ENCODE measurements at regions of chr20 and their contacts with region 1.

Region 1: GRCh38 chr20:57654363-57654997 is 34.3 kb upstream of the ZBP1 start:
- DNase-seq: peak; percentile 37 to 74 (median 47)
- H3K4me3 ChIP-seq: no peak overlapping the region
- H3K4me3 Mint-ChIP-seq: no peak overlapping the region
- H3K27ac ChIP-seq: no peak overlapping the region
- H3K27ac Mint-ChIP-seq: peak overlapping the region in 3 of 8 donors; percentile 66 to 77 (median 77)
- H3K4me1 ChIP-seq: peaks cover 22% of the 10 kb centered on the region
- H3K4me1 Mint-ChIP-seq: peaks cover 15 to 41% (median 20%) of the 10 kb centered on the region in 3 donors
- H3K27me3 ChIP-seq: no peaks in the 10 kb centered on the region
- H3K27me3 Mint-ChIP-seq: peaks cover 0 to 4% of the 10 kb centered on the region in 2 donors

Region 2: GRCh38 chr20:57391074-57391554 is 263.4 kb before region 1 on chr20 and contains the start of gene RBM38:
- CTCF ChIA-PET with region 1: no interaction called
- POLR2A ChIA-PET with region 1: no interaction called
- DNase-seq: peak; percentile 65 to 80 (median 69)
- H3K4me3 ChIP-seq: peak within 1 kb of the TSS; percentile 96
- H3K4me3 Mint-ChIP-seq: peak within 1 kb of the TSS; percentile 88 to 99 (median 94)
- H3K27ac ChIP-seq: peak within 1 kb of the TSS; percentile 96
- H3K27ac Mint-ChIP-seq: peak within 1 kb of the TSS; percentile 90 to 100 (median 99)
- H3K4me1 ChIP-seq: peaks cover 48% of the 10 kb centered on the region
- H3K4me1 Mint-ChIP-seq: peaks cover 45 to 57% (median 46%) of the 10 kb centered on the region in 3 donors
- H3K27me3 ChIP-seq: no peaks in the 10 kb centered on the region
- H3K27me3 Mint-ChIP-seq: peaks cover 0 to 5% of the 10 kb centered on the region in 2 donors
- total RNA-seq, gene RBM38: 101 to 107 TPM

Region 3: GRCh38 chr20:57605045-57605444 is 49.4 kb before region 1 on chr20:
- CTCF ChIA-PET with region 1: interaction called, 11 read pairs
- POLR2A ChIA-PET with region 1: no interaction called
- DNase-seq: peak in 4 of 5 donors; percentile 24 to 79 (median 58)
- H3K4me3 ChIP-seq: no peak overlapping the region
- H3K4me3 Mint-ChIP-seq: peak overlapping the region; percentile 4 to 75 (median 70)
- H3K27ac ChIP-seq: peak overlapping the region; percentile 65
- H3K27ac Mint-ChIP-seq: peak overlapping the region; percentile 88 to 98 (median 95)
- H3K4me1 ChIP-seq: peaks cover 16% of the 10 kb centered on the region
- H3K4me1 Mint-ChIP-seq: peaks cover 27 to 49% (median 28%) of the 10 kb centered on the region in 3 donors
- H3K27me3 ChIP-seq: no peaks in the 10 kb centered on the region
- H3K27me3 Mint-ChIP-seq: peaks cover 0 to 5% of the 10 kb centered on the region in 2 donors

Region 4: DNA sequence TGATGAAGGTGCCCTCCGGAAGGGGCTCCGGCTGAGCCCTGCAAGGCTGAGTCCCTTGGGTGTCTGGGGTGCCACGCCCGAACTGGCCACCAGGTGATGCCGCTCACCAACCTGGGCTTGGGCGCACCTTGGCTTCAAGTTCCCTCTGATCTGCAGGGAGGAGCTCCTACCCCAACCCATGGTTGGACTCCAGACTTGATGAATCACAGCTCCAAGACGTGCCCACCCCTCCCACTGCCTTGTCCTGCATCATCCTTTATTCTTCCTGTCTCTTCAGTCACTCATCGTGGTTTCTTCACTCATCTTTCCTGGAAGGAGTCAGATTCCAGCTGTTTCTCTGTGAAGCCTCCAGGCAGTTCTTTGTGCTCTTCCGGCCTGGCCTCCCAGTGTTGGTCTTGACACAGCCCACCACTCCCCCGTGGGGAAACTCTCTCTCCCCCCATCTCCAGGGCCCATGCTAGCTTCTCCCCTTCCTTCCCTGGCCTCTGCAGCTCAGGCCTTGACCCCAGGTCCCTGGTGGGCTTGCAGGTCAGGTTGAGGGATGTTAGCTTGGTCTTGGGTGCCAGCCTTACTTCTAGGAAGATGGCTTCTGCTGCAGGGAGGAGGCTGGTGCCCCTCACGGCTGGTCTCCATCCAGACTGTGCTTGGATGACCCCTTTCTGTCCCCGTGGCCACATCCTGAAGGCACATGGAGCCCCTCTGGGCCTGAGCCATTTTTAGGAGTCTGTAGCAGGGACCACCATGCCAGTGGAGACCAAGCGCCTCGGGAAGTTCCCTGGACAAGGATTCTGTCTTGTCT is 31.7 kb before region 1 on chr20:
- CTCF ChIA-PET with region 1: interaction called, 45 read pairs
- POLR2A ChIA-PET with region 1: interaction called, 6 read pairs
- DNase-seq: peak; percentile 48 to 79 (median 55)
- H3K4me3 ChIP-seq: no peak overlapping the region
- H3K4me3 Mint-ChIP-seq: peak overlapping the region in 5 of 7 donors; percentile 26 to 81 (median 69)
- H3K27ac ChIP-seq: no peak overlapping the region
- H3K27ac Mint-ChIP-seq: peak overlapping the region; percentile 46 to 94 (median 88)
- H3K4me1 ChIP-seq: peaks cover 72% of the 10 kb centered on the region
- H3K4me1 Mint-ChIP-seq: peaks cover 63 to 79% (median 75%) of the 10 kb centered on the region in 3 donors
- H3K27me3 ChIP-seq: no peaks in the 10 kb centered on the region
- H3K27me3 Mint-ChIP-seq: peaks cover 0 to 3% of the 10 kb centered on the region in 2 donors

Region 5: DNA sequence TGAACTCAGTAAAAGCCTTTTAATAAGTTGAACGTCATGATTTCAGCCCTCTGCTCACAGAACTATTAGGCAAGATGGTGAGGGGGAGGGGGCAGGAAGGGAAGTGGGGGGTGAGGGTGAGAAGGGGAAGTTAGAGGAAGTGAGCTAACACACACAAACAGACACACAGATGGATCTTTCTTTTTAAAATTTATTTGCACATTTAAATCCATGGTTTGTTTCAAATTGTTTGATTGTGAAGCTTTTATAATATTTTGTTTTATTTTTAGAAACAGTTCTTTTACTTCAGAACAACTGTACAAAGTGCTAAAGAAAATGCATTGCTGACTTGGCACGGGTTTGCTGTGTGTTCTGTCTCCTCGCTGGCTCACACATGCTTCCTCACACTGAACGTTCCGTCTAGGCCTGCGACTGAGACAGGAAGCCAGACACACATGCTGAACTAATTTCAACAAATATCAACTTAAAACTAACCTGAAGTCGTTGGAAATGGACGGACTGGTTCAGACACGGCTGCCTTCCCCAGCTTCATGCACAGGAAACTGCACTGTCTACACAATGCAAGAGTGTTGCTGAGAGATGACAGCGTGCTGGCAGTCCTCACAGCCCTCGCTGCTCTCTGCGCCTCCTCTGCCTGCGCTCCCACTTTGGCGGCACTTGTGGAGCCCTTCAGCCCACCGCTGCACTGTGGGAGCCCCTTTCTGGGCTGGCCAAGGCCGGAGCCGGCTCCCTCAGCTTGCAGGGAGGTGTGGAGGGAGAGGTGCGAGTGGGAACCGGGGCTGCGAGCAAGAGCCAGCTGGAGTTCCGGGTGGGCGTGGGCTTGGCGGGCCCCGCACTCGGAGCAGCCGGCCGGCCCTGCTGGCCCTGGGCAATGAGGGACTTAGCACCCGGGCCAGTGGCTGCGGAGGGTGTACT is 26.2 kb before region 1 on chr20:
- CTCF ChIA-PET with region 1: interaction called, 45 read pairs
- POLR2A ChIA-PET with region 1: interaction called, 6 read pairs
- DNase-seq: peak; percentile 42 to 80 (median 68)
- H3K4me3 ChIP-seq: peak overlapping the region; percentile 66
- H3K4me3 Mint-ChIP-seq: peak overlapping the region; percentile 61 to 96 (median 86)
- H3K27ac ChIP-seq: peak overlapping the region; percentile 68
- H3K27ac Mint-ChIP-seq: peak overlapping the region; percentile 93 to 100 (median 98)
- H3K4me1 ChIP-seq: peaks cover 54% of the 10 kb centered on the region
- H3K4me1 Mint-ChIP-seq: peaks cover 53 to 78% (median 78%) of the 10 kb centered on the region in 3 donors
- H3K27me3 ChIP-seq: no peaks in the 10 kb centered on the region
- H3K27me3 Mint-ChIP-seq: peaks cover 0 to 9% of the 10 kb centered on the region in 2 donors

Region 6: GRCh38 chr20:57667924-57668782 is 13.7 kb after region 1 on chr20:
- CTCF ChIA-PET with region 1: interaction called, 11 read pairs
- POLR2A ChIA-PET with region 1: no interaction called
- DNase-seq: no peak
- H3K4me3 ChIP-seq: no peak overlapping the region
- H3K4me3 Mint-ChIP-seq: no peak overlapping the region
- H3K27ac ChIP-seq: no peak overlapping the region
- H3K27ac Mint-ChIP-seq: peak overlapping the region in 1 of 8 donors; percentile 29
- H3K4me1 ChIP-seq: no peaks in the 10 kb centered on the region
- H3K4me1 Mint-ChIP-seq: peaks cover 0 to 4% (median 0%) of the 10 kb centered on the region in 3 donors
- H3K27me3 ChIP-seq: no peaks in the 10 kb centered on the region
- H3K27me3 Mint-ChIP-seq: peaks cover 0 to 6% of the 10 kb centered on the region in 2 donors

Region 7: DNA sequence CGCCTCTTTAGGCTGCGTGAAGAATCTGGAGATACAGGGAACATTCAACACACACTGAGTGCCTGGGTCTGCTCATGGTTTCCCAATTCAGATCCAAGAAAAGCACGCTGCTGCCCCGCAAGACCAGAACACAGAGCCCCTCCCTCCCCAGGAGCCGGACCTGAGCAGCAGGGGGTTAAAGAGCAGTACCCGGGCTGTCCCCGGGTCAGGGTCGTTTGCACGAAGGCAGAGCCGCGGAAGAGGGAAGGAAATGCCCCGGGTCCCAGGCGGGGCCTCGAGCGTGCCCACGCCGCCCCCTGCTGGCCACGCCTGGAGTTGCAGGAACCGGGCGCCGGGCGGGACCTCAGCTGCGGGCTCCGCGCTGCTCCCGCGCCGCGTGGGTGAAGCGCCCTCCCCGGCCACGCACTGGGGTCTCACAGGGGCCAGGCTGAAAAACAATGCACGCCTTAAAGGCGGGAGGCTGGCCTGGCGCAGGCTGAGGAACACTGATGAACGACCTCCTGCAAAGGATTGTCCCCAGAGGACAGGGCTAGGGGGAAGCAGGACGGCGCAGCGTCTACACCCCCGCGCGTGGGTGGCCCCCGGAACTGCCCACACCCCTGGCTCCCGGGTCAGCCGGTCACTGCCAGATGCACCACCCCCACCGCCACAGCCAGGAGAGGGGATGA is 525.1 kb after region 1 on chr20:
- CTCF ChIA-PET with region 1: interaction called, 10 read pairs
- POLR2A ChIA-PET with region 1: no interaction called
- DNase-seq: peak; percentile 43 to 72 (median 52)
- H3K4me3 ChIP-seq: peak overlapping the region; percentile 47
- H3K4me3 Mint-ChIP-seq: peak overlapping the region in 5 of 7 donors; percentile 26 to 68 (median 53)
- H3K27ac ChIP-seq: no peak overlapping the region
- H3K27ac Mint-ChIP-seq: peak overlapping the region in 1 of 8 donors; percentile 48
- H3K4me1 ChIP-seq: peaks cover 9% of the 10 kb centered on the region
- H3K4me1 Mint-ChIP-seq: peaks cover 3 to 17% (median 5%) of the 10 kb centered on the region in 3 donors
- H3K27me3 ChIP-seq: peaks cover 12% of the 10 kb centered on the region
- H3K27me3 Mint-ChIP-seq: peaks cover 18 to 43% of the 10 kb centered on the region in 2 donors

Measured in CD8-positive, alpha-beta memory T cell (primary cell).